Sigmoid colon (tissue), 7 donors: ENCODE measurements at regions of chr1 and their contacts with region 1.

Region 1: GRCh38 chr1:113978863-113979702 is at the start of gene OLFML3:
- DNase-seq: peak; percentile 96
- H3K4me3 ChIP-seq: peak within 1 kb of the TSS; percentile 37 to 55 (median 50)
- H3K27ac ChIP-seq: peak within 1 kb of the TSS; percentile 80 to 91 (median 90)
- H3K4me1 ChIP-seq: peaks cover 0 to 86% (median 69%) of the 10 kb centered on the region in 4 donors
- H3K27me3 ChIP-seq: no peaks in the 10 kb centered on the region
- CTCF ChIP-seq: peak; percentile 70 to 81 (median 77)
- EP300 ChIP-seq: peak in 3 of 4 donors; percentile 40 to 87 (median 51)
- POLR2A ChIP-seq: peak; percentile 83 to 94
- total RNA-seq, gene OLFML3: 94.0 to 149 (median 132) TPM

Region 2: GRCh38 chr1:113904674-113905434 is 74.2 kb before region 1 on chr1 and contains the starts of genes AP4B1 and DCLRE1B:
- intact Hi-C with region 1: loop called (anchors 2 kb)
- DNase-seq: peak; percentile 100
- H3K4me3 ChIP-seq: peak within 1 kb of the TSS; percentile 67 to 81 (median 73)
- H3K27ac ChIP-seq: peak within 1 kb of the TSS; percentile 87 to 95 (median 92)
- H3K4me1 ChIP-seq: peaks cover 0 to 23% (median 21%) of the 10 kb centered on the region in 4 donors
- H3K27me3 ChIP-seq: no peaks in the 10 kb centered on the region
- CTCF ChIP-seq: peak; percentile 64 to 82 (median 77)
- EP300 ChIP-seq: peak in 2 of 4 donors; percentile 30 to 51
- POLR2A ChIP-seq: peak; percentile 55 to 74
- total RNA-seq, gene AP4B1: 6.2 to 15.5 (median 10.8) TPM
- total RNA-seq, gene DCLRE1B: 4.3 to 4.9 (median 4.4) TPM

Region 3: GRCh38 chr1:114093624-114094376 is 114.7 kb after region 1 on chr1:
- intact Hi-C with region 1: loop called (anchors 2 kb)
- DNase-seq: no peak
- H3K4me3 ChIP-seq: no peak overlapping the region
- H3K27ac ChIP-seq: peak overlapping the region in 3 of 4 donors; percentile 54 to 74 (median 54)
- H3K4me1 ChIP-seq: peaks cover 0 to 30% (median 14%) of the 10 kb centered on the region in 4 donors
- H3K27me3 ChIP-seq: no peaks in the 10 kb centered on the region
- CTCF ChIP-seq: peak in 1 of 4 experiments; percentile 12
- EP300 ChIP-seq: no peak
- POLR2A ChIP-seq: no peak

Region 4: GRCh38 chr1:114224196-114224907 is 245.3 kb after region 1 on chr1:
- intact Hi-C with region 1: loop called (anchors 5 kb)
- DNase-seq: no peak
- H3K4me3 ChIP-seq: no peak overlapping the region
- H3K27ac ChIP-seq: no peak overlapping the region
- H3K4me1 ChIP-seq: peaks cover 0 to 16% (median 2%) of the 10 kb centered on the region in 4 donors
- H3K27me3 ChIP-seq: no peaks in the 10 kb centered on the region
- CTCF ChIP-seq: no peak
- EP300 ChIP-seq: no peak
- POLR2A ChIP-seq: no peak

Region 5: GRCh38 chr1:114346480-114347029 is 367.5 kb after region 1 on chr1:
- intact Hi-C with region 1: loop called (anchors 1 kb)
- DNase-seq: peak; percentile 97
- H3K4me3 ChIP-seq: peak overlapping the region; percentile 38 to 53 (median 48)
- H3K27ac ChIP-seq: peak overlapping the region; percentile 82 to 85 (median 84)
- H3K4me1 ChIP-seq: peaks cover 0 to 13% (median 10%) of the 10 kb centered on the region in 4 donors
- H3K27me3 ChIP-seq: no peaks in the 10 kb centered on the region
- CTCF ChIP-seq: peak; percentile 100
- EP300 ChIP-seq: no peak
- POLR2A ChIP-seq: no peak